Esophagus muscularis mucosa (tissue), 4 donors: ENCODE measurements at regions of chr4 and their contacts with region 1.

Region 1: DNA sequence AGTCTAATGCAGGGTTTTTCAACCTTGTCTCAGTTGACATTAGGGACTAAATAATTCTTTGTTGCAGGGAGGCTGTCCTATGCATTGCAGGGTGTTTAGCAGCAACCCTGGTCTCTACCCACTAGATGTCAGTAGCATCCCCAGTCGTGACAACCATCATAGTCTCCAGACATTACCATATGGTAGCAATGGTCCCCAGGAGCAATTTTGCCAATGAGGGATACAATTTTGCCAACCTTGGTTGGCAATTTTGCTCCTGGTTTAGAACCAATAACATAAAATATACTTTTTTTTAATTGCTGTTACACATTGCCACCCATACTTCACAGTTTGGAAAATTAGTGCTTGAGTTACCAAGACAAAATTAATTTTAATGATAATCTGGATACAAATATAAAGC is 6.0 kb downstream of the EREG start:
- DNase-seq: no peak
- H3K4me3 ChIP-seq: no peak overlapping the region
- H3K27ac ChIP-seq: no peak overlapping the region
- H3K4me1 ChIP-seq: peaks cover 0 to 30% (median 9%) of the 10 kb centered on the region in 4 donors
- H3K27me3 ChIP-seq: no peaks in the 10 kb centered on the region
- CTCF ChIP-seq: peak; percentile 28 to 59 (median 35)
- EP300 ChIP-seq: no peak
- POLR2A ChIP-seq: no peak

Region 2: GRCh38 chr4:74531963-74532794 is 161.3 kb after region 1 on chr4:
- intact Hi-C with region 1: no loop called
- DNase-seq: no peak
- H3K4me3 ChIP-seq: no peak overlapping the region
- H3K27ac ChIP-seq: no peak overlapping the region
- H3K4me1 ChIP-seq: peaks cover 0 to 5% (median 0%) of the 10 kb centered on the region in 4 donors
- H3K27me3 ChIP-seq: no peaks in the 10 kb centered on the region
- CTCF ChIP-seq: peak in 1 of 3 experiments; percentile 15
- EP300 ChIP-seq: no peak
- POLR2A ChIP-seq: no peak

Region 3: GRCh38 chr4:74555231-74555630 is 184.3 kb after region 1 on chr4:
- intact Hi-C with region 1: loop called (anchors 10 kb)
- DNase-seq: no peak
- H3K4me3 ChIP-seq: no peak overlapping the region
- H3K27ac ChIP-seq: no peak overlapping the region
- H3K4me1 ChIP-seq: peaks cover 0 to 17% (median 8%) of the 10 kb centered on the region in 4 donors
- H3K27me3 ChIP-seq: no peaks in the 10 kb centered on the region
- CTCF ChIP-seq: no peak
- EP300 ChIP-seq: no peak
- POLR2A ChIP-seq: no peak

Region 4: DNA sequence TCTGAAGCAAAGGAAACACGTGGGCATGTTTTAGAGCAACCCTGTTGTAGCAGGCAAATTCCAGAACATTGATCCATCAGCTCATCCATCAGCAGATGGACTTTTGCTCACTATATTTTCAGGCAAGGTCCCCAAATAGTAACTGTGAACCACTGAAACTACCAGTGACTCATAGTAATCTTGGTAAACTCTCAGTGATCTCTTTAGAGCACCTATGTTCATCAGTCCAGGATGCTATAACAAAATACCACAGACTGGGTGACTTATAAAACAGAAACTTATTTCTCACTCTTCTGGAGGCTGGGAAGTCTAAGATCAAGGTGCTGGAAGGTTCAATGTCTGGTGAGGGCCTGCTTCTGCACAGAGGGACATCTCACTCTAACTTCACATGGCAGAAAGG is 452.3 kb after region 1 on chr4:
- intact Hi-C with region 1: no loop called
- DNase-seq: no peak
- H3K4me3 ChIP-seq: no peak overlapping the region
- H3K27ac ChIP-seq: no peak overlapping the region
- H3K4me1 ChIP-seq: no peaks in the 10 kb centered on the region
- H3K27me3 ChIP-seq: no peaks in the 10 kb centered on the region
- CTCF ChIP-seq: no peak
- EP300 ChIP-seq: no peak
- POLR2A ChIP-seq: no peak